ENCODE measurements at regions of chr18 and their contacts with region 1.

Region 1: GRCh38 chr18:35040988-35041814 is at the start of gene MAPRE2:
- DNase-seq: peak; percentile 98 to 99 (median 99)
- H3K4me3 ChIP-seq: peak within 1 kb of the TSS; percentile 73 to 98
- H3K4me3 Mint-ChIP-seq: peak within 1 kb of the TSS; percentile 91 to 99 (median 98)
- H3K27ac ChIP-seq: peak within 1 kb of the TSS; percentile 94
- H3K27ac Mint-ChIP-seq: peak within 1 kb of the TSS; percentile 93 to 100 (median 98)
- H3K4me1 ChIP-seq: peaks cover 43% of the 10 kb centered on the region
- H3K4me1 Mint-ChIP-seq: peaks cover 35 to 60% (median 46%) of the 10 kb centered on the region in 4 donors
- H3K27me3 ChIP-seq: no peaks in the 10 kb centered on the region
- H3K27me3 Mint-ChIP-seq: peaks cover 0 to 2% of the 10 kb centered on the region in 2 donors
- total RNA-seq, gene MAPRE2: 48.8 to 54.1 TPM

Region 2: DNA sequence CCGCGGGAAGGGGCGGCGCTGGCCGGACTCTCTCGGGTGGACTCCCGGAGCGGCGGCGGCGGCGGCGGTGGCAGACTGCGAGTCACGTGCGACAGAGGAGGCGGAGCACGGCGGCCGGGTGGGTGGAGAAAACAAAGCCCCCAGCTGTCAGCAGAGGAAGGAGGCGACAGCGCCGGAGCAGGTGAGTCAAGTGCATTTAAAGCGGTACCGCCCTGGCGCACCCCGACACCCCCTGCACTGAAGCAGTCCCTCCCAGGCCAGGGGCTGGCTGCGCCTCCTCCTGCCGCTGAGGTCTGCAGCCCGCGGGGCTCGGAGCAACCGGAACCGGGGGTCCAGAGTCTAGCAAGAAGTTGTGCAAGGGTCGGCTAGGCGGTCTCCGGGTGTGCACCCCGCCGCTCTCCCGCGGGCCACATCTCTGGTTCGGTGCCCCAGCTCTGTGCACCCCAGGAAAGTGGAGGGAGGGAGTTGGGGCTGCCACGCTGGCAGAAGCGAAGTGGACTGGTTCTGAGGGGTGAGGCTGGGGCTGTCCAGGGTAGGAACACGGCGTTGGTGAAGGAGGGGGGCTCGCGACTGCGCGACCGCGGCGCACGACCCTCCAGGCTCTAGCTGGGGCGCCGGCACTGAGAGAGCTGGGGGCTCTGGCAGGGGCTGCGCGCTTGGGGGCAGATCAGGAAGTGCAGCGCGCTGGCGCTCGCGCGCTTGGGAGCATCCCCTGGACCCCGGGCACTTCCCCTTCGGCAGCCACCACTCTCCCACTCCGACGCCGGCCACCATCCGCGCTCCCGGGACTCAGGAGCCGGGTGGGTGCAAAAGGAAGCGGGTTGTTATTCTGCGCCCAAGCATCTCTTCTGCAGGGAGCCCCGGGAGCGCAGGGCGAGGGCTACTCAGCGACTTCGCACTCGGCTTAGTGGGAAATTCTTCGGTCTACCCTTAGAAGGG is 64.0 kb before region 1 on chr18:
- CTCF ChIA-PET with region 1: interaction called, 4 read pairs
- POLR2A ChIA-PET with region 1: interaction called, 23 read pairs
- intact Hi-C with region 1: loop called (anchors 1 kb)
- DNase-seq: peak; percentile 58 to 81 (median 66)
- H3K4me3 ChIP-seq: peak overlapping the region; percentile 60 to 82
- H3K4me3 Mint-ChIP-seq: peak overlapping the region; percentile 90 to 97 (median 94)
- H3K27ac ChIP-seq: no peak overlapping the region
- H3K27ac Mint-ChIP-seq: peak overlapping the region in 4 of 7 donors; percentile 83 to 90 (median 88)
- H3K4me1 ChIP-seq: peaks cover 14% of the 10 kb centered on the region
- H3K4me1 Mint-ChIP-seq: peaks cover 15 to 30% (median 19%) of the 10 kb centered on the region in 4 donors
- H3K27me3 ChIP-seq: peaks cover 9% of the 10 kb centered on the region
- H3K27me3 Mint-ChIP-seq: peaks cover 10 to 12% of the 10 kb centered on the region in 2 donors

Region 3: GRCh38 chr18:35071819-35072247 is 30.6 kb after region 1 on chr18:
- CTCF ChIA-PET with region 1: interaction called, 3 read pairs
- POLR2A ChIA-PET with region 1: no interaction called
- intact Hi-C with region 1: loop called (anchors 2 kb)
- DNase-seq: no peak
- H3K4me3 ChIP-seq: no peak overlapping the region
- H3K4me3 Mint-ChIP-seq: no peak overlapping the region
- H3K27ac ChIP-seq: no peak overlapping the region
- H3K27ac Mint-ChIP-seq: peak overlapping the region in 3 of 7 donors; percentile 27 to 63 (median 43)
- H3K4me1 ChIP-seq: no peaks in the 10 kb centered on the region
- H3K4me1 Mint-ChIP-seq: peaks cover 22 to 53% (median 33%) of the 10 kb centered on the region in 4 donors
- H3K27me3 ChIP-seq: no peaks in the 10 kb centered on the region
- H3K27me3 Mint-ChIP-seq: no peaks in the 10 kb centered on the region

Region 4: GRCh38 chr18:35143622-35144596 is 102.7 kb after region 1 on chr18:
- CTCF ChIA-PET with region 1: interaction called, 11 read pairs
- POLR2A ChIA-PET with region 1: no interaction called
- intact Hi-C with region 1: no loop called
- DNase-seq: peak; percentile 22 to 48 (median 39)
- H3K4me3 ChIP-seq: no peak overlapping the region
- H3K4me3 Mint-ChIP-seq: no peak overlapping the region
- H3K27ac ChIP-seq: no peak overlapping the region
- H3K27ac Mint-ChIP-seq: peak overlapping the region in 2 of 7 donors; percentile 1 to 43
- H3K4me1 ChIP-seq: no peaks in the 10 kb centered on the region
- H3K4me1 Mint-ChIP-seq: peaks cover 0 to 1% (median 0%) of the 10 kb centered on the region in 4 donors
- H3K27me3 ChIP-seq: no peaks in the 10 kb centered on the region
- H3K27me3 Mint-ChIP-seq: no peaks in the 10 kb centered on the region

Region 5: GRCh38 chr18:35290073-35290735 is 249.0 kb after region 1 on chr18 and contains the start of gene ZSCAN30:
- CTCF ChIA-PET with region 1: no interaction called
- POLR2A ChIA-PET with region 1: interaction called, 12 read pairs
- intact Hi-C with region 1: loop called (anchors 1 kb)
- DNase-seq: peak; percentile 94 to 96 (median 95)
- H3K4me3 ChIP-seq: peak within 1 kb of the TSS; percentile 84 to 89
- H3K4me3 Mint-ChIP-seq: peak within 1 kb of the TSS; percentile 96 to 100 (median 98)
- H3K27ac ChIP-seq: peak within 1 kb of the TSS; percentile 84
- H3K27ac Mint-ChIP-seq: peak within 1 kb of the TSS; percentile 98 to 100 (median 99)
- H3K4me1 ChIP-seq: peaks cover 36% of the 10 kb centered on the region
- H3K4me1 Mint-ChIP-seq: peaks cover 36 to 60% (median 46%) of the 10 kb centered on the region in 4 donors
- H3K27me3 ChIP-seq: no peaks in the 10 kb centered on the region
- H3K27me3 Mint-ChIP-seq: no peaks in the 10 kb centered on the region
- total RNA-seq, gene ZSCAN30: 16.9 to 18.4 TPM

Region 6: GRCh38 chr18:35497370-35498197 is 456.4 kb after region 1 on chr18 and contains the start of gene INO80C:
- CTCF ChIA-PET with region 1: no interaction called
- POLR2A ChIA-PET with region 1: interaction called, 7 read pairs
- intact Hi-C with region 1: loop called (anchors 5 kb)
- DNase-seq: peak; percentile 92 to 94 (median 93)
- H3K4me3 ChIP-seq: peak within 1 kb of the TSS; percentile 94 to 96
- H3K4me3 Mint-ChIP-seq: peak within 1 kb of the TSS; percentile 95 to 99 (median 96)
- H3K27ac ChIP-seq: peak within 1 kb of the TSS; percentile 84
- H3K27ac Mint-ChIP-seq: peak within 1 kb of the TSS; percentile 98 to 100 (median 100)
- H3K4me1 ChIP-seq: peaks cover 23% of the 10 kb centered on the region
- H3K4me1 Mint-ChIP-seq: peaks cover 14 to 39% (median 28%) of the 10 kb centered on the region in 4 donors
- H3K27me3 ChIP-seq: no peaks in the 10 kb centered on the region
- H3K27me3 Mint-ChIP-seq: no peaks in the 10 kb centered on the region
- total RNA-seq, gene INO80C: 27.3 to 30.3 TPM

Region 7: GRCh38 chr18:36067055-36067957 is 1026.1 kb after region 1 on chr18 and contains the start of gene RPRD1A:
- CTCF ChIA-PET with region 1: no interaction called
- POLR2A ChIA-PET with region 1: no interaction called
- intact Hi-C with region 1: loop called (anchors 5 kb)
- DNase-seq: peak; percentile 94 to 97 (median 94)
- H3K4me3 ChIP-seq: peak within 1 kb of the TSS; percentile 81 to 87
- H3K4me3 Mint-ChIP-seq: peak within 1 kb of the TSS; percentile 92 to 98 (median 95)
- H3K27ac ChIP-seq: peak within 1 kb of the TSS; percentile 74
- H3K27ac Mint-ChIP-seq: peak within 1 kb of the TSS; percentile 89 to 98 (median 96)
- H3K4me1 ChIP-seq: peaks cover 32% of the 10 kb centered on the region
- H3K4me1 Mint-ChIP-seq: peaks cover 31 to 48% (median 40%) of the 10 kb centered on the region in 4 donors
- H3K27me3 ChIP-seq: no peaks in the 10 kb centered on the region
- H3K27me3 Mint-ChIP-seq: peaks cover 0 to 1% of the 10 kb centered on the region in 2 donors
- total RNA-seq, gene RPRD1A: 40.1 to 42.3 TPM